Activated CD4-positive, alpha-beta memory T cell treated with anti-CD3 and anti-CD28 coated beads for 36 hours (primary cell): ENCODE measurements at regions of chr15 and their contacts with region 1.

Region 1: DNA sequence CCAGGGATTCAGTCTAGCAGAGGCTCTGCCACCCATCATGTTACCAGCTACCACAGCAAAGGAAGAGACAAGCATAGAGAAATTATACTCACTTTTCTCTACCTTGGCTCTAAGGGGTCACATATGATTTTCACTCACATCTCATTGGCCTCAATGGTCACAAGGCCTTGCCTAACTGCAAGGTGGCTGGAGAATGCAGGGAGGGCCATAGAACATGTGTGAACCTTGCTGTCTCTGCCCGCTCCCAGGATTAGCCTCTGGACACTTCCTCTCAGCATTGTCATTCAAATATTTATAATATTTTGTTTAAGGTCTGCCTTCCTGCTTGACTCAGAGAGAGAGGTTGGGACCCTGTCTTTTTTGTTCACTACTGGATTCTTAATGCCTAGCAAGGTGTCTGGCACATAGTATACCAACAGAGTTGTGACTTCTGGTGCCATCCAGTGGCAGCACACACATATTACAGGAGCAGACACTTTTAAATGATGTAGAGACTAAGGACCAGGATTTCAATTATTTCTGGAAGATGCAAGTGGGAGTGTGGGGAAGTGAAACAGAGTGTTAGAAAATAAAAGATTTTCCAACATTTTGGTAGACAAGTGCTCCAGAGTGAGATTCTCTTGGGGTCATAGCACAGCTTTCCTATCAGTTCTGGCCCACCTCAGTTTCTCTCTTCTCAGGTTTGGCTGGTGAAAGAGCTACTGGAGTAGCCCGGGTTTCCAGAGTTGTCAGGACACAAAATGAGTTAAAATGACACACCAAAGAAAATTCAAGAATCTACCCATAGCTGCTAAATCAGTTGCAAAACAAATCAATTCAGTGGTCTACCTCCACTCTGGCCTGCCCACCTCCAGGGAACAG is 119.0 kb upstream of the RASGRP1 start:
- DNase-seq: peak; percentile 84
- H3K4me3 Mint-ChIP-seq: peak overlapping the region; percentile 5
- H3K27ac Mint-ChIP-seq: peak overlapping the region; percentile 92
- H3K4me1 Mint-ChIP-seq: peaks cover 71% of the 10 kb centered on the region
- H3K27me3 Mint-ChIP-seq: no peaks in the 10 kb centered on the region

Region 2: DNA sequence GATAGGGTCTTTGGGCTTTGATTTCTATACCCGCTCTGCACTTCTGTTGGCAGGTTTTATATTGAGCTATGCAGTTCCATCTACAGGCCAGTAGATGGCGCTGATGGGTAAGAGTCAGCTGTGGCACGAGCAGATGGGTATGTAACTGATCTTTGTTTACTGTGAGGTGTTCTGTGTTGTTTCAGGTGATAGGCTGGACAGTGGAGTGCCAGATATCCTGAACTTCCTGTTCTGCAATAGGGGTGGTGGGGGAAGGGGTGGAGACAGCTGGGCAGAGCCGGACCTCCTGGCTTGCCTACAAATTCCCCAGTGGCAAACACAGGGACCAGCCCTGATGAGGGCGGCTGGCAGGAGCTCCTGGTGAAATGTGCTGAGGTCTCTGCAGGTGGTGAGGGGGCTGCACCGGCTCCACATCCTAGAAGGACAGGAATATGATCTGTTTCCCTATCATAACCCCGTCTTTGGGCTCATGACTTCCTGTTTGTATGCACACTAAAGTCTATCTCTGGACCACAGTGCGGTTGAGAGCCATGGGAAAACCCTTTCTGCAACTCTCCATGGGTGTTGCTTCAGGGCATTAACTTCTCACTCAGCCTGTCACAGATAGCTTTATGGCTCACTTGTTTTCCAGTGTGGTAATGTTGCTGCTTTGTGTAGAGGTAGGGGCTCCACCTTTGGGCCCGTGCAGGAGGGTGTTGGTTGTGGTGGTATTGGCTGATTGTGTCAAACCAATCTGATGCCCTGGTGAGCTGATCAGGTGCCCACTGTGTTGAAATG is 243.1 kb before region 1 on chr15:
- CTCF ChIA-PET with region 1: interaction called, 96 read pairs
- POLR2A ChIA-PET with region 1: interaction called, 3 read pairs
- intact Hi-C with region 1: no loop called
- DNase-seq: peak; percentile 60
- H3K4me3 Mint-ChIP-seq: no peak overlapping the region
- H3K27ac Mint-ChIP-seq: peak overlapping the region; percentile 6
- H3K4me1 Mint-ChIP-seq: peaks cover 5% of the 10 kb centered on the region
- H3K27me3 Mint-ChIP-seq: peaks cover 11% of the 10 kb centered on the region

Region 3: DNA sequence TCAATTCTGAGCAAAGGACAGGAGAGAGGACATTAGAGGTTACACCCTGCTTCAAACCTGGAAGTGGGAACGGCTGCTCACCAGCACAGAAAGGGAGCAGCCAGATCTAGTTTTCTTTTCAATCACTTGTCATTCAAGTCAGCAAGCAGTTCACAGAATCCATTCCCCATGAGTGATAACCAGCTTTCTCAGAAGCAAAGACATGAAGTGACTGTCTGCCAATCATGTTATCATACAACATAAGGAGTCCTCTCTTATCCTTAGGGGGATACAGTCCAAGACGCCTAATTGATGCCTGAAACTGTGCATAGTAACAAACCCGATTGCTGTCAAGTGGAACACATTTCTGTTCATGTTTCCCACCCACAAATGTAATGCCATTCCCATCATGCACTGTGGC is 175.0 kb before region 1 on chr15:
- CTCF ChIA-PET with region 1: interaction called, 93 read pairs
- POLR2A ChIA-PET with region 1: interaction called, 4 read pairs
- intact Hi-C with region 1: no loop called
- DNase-seq: peak; percentile 55
- H3K4me3 Mint-ChIP-seq: no peak overlapping the region
- H3K27ac Mint-ChIP-seq: peak overlapping the region; percentile 88
- H3K4me1 Mint-ChIP-seq: peaks cover 38% of the 10 kb centered on the region
- H3K27me3 Mint-ChIP-seq: no peaks in the 10 kb centered on the region

Region 4: DNA sequence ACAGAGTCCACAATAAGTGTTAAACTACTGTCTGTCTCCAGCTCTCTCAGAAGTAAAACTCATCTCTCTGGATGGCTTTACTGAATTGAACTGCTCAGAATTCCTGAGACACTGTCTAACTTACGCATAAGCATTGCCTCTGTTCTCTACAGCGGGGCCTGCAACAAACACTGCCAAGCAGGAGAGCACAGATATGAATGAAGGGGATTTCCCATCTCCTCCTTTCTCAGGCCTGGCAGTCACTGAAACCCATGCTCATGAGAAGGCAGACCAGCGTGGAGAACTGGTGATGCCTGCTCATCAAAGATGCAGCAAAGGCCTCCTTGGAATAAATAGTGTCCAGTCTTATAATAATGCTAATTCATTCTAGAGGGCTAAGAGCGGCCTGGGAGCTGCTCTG is 129.3 kb before region 1 on chr15:
- CTCF ChIA-PET with region 1: interaction called, 551 read pairs
- POLR2A ChIA-PET with region 1: interaction called, 307 read pairs
- intact Hi-C with region 1: no loop called
- DNase-seq: peak; percentile 72
- H3K4me3 Mint-ChIP-seq: peak overlapping the region; percentile 15
- H3K27ac Mint-ChIP-seq: peak overlapping the region; percentile 99
- H3K4me1 Mint-ChIP-seq: peaks cover 89% of the 10 kb centered on the region
- H3K27me3 Mint-ChIP-seq: no peaks in the 10 kb centered on the region

Region 5: GRCh38 chr15:38647683-38648082 is 35.9 kb before region 1 on chr15:
- CTCF ChIA-PET with region 1: interaction called, 20 read pairs
- POLR2A ChIA-PET with region 1: interaction called, 5 read pairs
- intact Hi-C with region 1: no loop called
- DNase-seq: no peak
- H3K4me3 Mint-ChIP-seq: no peak overlapping the region
- H3K27ac Mint-ChIP-seq: no peak overlapping the region
- H3K4me1 Mint-ChIP-seq: peaks cover 74% of the 10 kb centered on the region
- H3K27me3 Mint-ChIP-seq: no peaks in the 10 kb centered on the region

Region 6: GRCh38 chr15:38671675-38672254 is 11.8 kb before region 1 on chr15:
- CTCF ChIA-PET with region 1: interaction called, 150 read pairs
- POLR2A ChIA-PET with region 1: interaction called, 37 read pairs
- intact Hi-C with region 1: loop called (anchors 1 kb)
- DNase-seq: peak; percentile 71
- H3K4me3 Mint-ChIP-seq: peak overlapping the region; percentile 66
- H3K27ac Mint-ChIP-seq: peak overlapping the region; percentile 97
- H3K4me1 Mint-ChIP-seq: peaks cover 78% of the 10 kb centered on the region
- H3K27me3 Mint-ChIP-seq: no peaks in the 10 kb centered on the region